ENCODE measurements at regions of chr1 and their contacts with region 1.

Region 1: GRCh38 chr1:67274623-67275325 is 32.9 kb upstream of the IL12RB2 start:
- DNase-seq: peak; percentile 54
- H3K4me3 Mint-ChIP-seq: no peak overlapping the region
- H3K27ac Mint-ChIP-seq: peak overlapping the region; percentile 80
- H3K4me1 Mint-ChIP-seq: peaks cover 68% of the 10 kb centered on the region
- H3K27me3 Mint-ChIP-seq: no peaks in the 10 kb centered on the region

Region 2: DNA sequence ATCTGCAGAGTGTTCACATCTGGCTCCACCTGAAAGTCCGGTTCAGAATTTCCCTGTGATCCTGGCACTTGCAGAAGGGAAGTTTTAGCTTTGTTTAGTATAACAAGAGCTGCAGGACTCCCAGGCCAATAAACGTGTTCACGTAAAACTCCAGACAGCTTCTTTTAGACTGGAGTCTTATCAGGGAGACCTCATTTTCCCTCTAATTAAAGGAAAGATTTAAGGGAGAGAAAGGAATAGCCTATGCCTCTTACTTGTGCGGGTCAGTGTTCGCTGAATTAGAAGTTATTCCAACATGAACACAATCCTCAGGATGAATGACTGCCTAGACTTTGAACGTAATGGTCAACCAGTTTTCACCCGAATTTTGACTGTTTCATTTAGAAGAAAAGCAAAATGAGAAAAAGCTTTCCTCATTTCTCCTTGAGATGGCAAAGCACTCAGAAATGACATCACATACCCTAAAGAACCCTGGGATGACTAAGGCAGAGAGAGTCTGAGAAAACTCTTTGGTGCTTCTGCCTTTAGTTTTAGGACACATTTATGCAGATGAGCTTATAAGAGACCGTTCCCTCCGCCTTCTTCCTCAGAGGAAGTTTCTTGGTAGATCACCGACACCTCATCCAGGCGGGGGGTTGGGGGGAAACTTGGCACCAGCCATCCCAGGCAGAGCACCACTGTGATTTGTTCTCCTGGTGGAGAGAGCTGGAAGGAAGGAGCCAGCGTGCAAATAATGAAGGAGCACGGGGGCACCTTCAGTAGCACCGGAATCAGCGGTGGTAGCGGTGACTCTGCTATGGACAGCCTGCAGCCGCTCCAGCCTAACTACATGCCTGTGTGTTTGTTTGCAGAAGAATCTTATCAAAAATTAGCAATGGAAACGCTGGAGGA is 942.9 kb before region 1 on chr1:
- intact Hi-C with region 1: no loop called
- DNase-seq: peak; percentile 35
- H3K4me3 Mint-ChIP-seq: peak overlapping the region; percentile 98
- H3K27ac Mint-ChIP-seq: peak overlapping the region; percentile 95
- H3K4me1 Mint-ChIP-seq: peaks cover 60% of the 10 kb centered on the region
- H3K27me3 Mint-ChIP-seq: no peaks in the 10 kb centered on the region

Region 3: GRCh38 chr1:67053785-67054772 is 220.7 kb before region 1 on chr1 and contains the start of gene SLC35D1:
- intact Hi-C with region 1: loop called (anchors 2 kb)
- DNase-seq: peak; percentile 75
- H3K4me3 Mint-ChIP-seq: peak within 1 kb of the TSS; percentile 93
- H3K27ac Mint-ChIP-seq: peak within 1 kb of the TSS; percentile 94
- H3K4me1 Mint-ChIP-seq: peaks cover 49% of the 10 kb centered on the region
- H3K27me3 Mint-ChIP-seq: peaks cover 6% of the 10 kb centered on the region
- total RNA-seq, gene SLC35D1: 20.4 and 20.5 TPM in 2 replicates

Region 4: GRCh38 chr1:67174716-67175284 is 100.0 kb before region 1 on chr1:
- intact Hi-C with region 1: loop called (anchors 1 kb)
- DNase-seq: no peak
- H3K4me3 Mint-ChIP-seq: peak overlapping the region; percentile 76
- H3K27ac Mint-ChIP-seq: peak overlapping the region; percentile 98
- H3K4me1 Mint-ChIP-seq: peaks cover 68% of the 10 kb centered on the region
- H3K27me3 Mint-ChIP-seq: no peaks in the 10 kb centered on the region

Region 5: GRCh38 chr1:67230539-67230938 is 44.2 kb before region 1 on chr1:
- intact Hi-C with region 1: loop called (anchors 1 kb)
- DNase-seq: no peak
- H3K4me3 Mint-ChIP-seq: no peak overlapping the region
- H3K27ac Mint-ChIP-seq: no peak overlapping the region
- H3K4me1 Mint-ChIP-seq: peaks cover 35% of the 10 kb centered on the region
- H3K27me3 Mint-ChIP-seq: no peaks in the 10 kb centered on the region

Region 6: DNA sequence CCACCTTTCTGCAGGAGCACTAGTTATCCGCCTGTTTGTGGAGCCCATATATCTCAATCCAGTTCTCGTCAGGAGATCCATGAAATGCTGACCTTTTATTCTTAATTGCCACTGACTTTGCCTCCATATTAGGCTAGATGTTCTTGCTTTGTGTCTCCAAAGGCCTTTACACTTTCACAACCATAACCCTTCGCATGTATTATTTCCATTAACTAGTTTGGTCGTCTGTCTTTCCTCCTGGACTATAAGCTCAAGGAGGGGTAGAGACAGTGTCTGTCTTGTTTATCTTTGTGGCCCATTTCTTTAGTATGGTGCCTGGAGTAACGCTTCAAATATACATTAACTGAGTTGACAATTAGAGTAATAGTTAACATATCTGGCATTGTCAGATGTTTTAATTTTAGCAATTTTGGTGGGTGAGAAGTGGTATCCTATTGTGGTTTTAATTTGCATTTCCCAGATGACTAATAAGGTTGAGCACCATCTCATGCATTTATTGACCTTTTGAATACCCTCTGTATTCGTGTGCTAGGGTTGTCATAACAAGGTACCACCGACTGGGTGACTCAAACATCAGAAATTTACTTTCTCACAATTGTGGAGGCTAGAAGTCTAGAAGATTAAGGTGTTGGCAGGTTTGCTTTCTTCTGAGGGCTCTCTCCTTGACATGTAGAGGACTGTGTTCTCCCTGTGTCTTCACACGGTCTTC is 11.2 kb after region 1 on chr1:
- intact Hi-C with region 1: loop called (anchors 1 kb)
- DNase-seq: no peak
- H3K4me3 Mint-ChIP-seq: peak overlapping the region; percentile 5
- H3K27ac Mint-ChIP-seq: peak overlapping the region; percentile 79
- H3K4me1 Mint-ChIP-seq: peaks cover 61% of the 10 kb centered on the region
- H3K27me3 Mint-ChIP-seq: no peaks in the 10 kb centered on the region

Region 7: DNA sequence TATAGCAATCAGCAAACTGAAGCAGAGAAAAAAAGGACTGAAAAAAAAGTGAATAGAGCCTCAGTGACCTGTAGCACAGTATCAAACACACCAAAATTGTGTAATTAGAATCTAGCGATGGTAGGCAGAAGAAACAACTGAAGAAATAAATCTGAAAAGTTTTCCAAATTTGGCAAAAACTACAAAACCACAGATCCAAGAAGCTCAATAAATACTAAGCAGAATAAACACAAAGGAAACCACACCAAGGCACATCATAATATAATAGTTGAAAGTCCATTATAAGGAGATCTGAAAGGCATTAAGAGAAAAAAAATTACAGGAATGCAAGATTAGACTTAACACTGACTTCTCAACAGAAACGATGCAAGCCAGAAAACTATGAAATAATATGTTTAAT is 25.8 kb after region 1 on chr1:
- intact Hi-C with region 1: loop called (anchors 1 kb)
- DNase-seq: no peak
- H3K4me3 Mint-ChIP-seq: peak overlapping the region; percentile 35
- H3K27ac Mint-ChIP-seq: peak overlapping the region; percentile 63
- H3K4me1 Mint-ChIP-seq: peaks cover 88% of the 10 kb centered on the region
- H3K27me3 Mint-ChIP-seq: no peaks in the 10 kb centered on the region

Region 8: GRCh38 chr1:67332653-67333529 is 58.1 kb after region 1 on chr1:
- intact Hi-C with region 1: loop called (anchors 1 kb)
- DNase-seq: peak; percentile 64
- H3K4me3 Mint-ChIP-seq: peak overlapping the region; percentile 27
- H3K27ac Mint-ChIP-seq: peak overlapping the region; percentile 99
- H3K4me1 Mint-ChIP-seq: peaks cover 77% of the 10 kb centered on the region
- H3K27me3 Mint-ChIP-seq: no peaks in the 10 kb centered on the region

Region 9: GRCh38 chr1:67463298-67463955 is 188.7 kb after region 1 on chr1:
- intact Hi-C with region 1: no loop called
- DNase-seq: no peak
- H3K4me3 Mint-ChIP-seq: no peak overlapping the region
- H3K27ac Mint-ChIP-seq: no peak overlapping the region
- H3K4me1 Mint-ChIP-seq: no peaks in the 10 kb centered on the region
- H3K27me3 Mint-ChIP-seq: peaks cover 3% of the 10 kb centered on the region

Measured in activated T-helper 1 cell treated with anti-CD3 and anti-CD28 coated beads, Interleukin-12 subunit alpha, Interleukin-12 subunit beta, Interleukin-2, Interleukin-4 antibody, amounts not matched to agents 30 ng/mL and 10 ng/mL and 1 ng/mL, durations not matched to agents 14 hours and 24 hours and 36 hours (primary cell).